ENCODE measurements at regions of chr9 and their contacts with region 1.

Region 1: DNA sequence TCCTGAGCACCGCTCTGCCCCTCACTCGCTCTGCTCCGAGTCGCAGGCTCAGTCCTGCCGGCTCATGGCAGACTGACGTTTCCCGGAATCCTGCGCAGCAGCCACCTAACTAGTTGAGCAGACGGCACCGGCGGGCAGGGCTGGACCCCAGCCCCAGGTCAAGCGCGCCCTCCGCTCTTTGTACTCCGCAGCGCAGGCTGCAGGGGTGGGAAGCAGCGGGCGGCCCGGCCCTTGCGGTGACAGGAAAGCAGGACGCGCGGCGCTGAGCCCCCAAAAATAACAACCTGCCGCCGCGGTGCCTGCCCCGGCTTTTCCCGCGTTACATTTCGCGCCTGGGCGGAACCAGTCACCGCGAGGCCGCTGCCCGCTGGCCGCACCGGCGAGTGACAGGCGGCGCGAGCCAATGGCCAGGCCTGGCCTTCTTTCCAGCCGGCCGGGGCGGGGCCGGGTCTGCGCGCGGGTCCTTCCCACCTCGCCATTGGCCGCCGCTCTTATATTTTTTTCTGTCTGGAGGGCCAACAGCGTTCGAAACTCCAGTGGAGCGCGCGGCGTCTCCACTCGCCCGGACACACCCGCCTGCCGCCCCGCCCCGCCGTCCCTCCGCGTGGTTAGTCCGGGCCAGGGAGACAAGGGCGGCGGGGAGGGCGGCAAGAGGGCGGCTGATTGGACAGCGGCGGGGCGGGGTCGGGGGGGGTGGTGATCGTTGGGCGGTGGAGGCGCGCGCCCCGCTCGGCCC is at the start of gene ZNF367:
- DNase-seq: peak; percentile 98
- total RNA-seq, gene ZNF367: 2.1 TPM

Region 2: DNA sequence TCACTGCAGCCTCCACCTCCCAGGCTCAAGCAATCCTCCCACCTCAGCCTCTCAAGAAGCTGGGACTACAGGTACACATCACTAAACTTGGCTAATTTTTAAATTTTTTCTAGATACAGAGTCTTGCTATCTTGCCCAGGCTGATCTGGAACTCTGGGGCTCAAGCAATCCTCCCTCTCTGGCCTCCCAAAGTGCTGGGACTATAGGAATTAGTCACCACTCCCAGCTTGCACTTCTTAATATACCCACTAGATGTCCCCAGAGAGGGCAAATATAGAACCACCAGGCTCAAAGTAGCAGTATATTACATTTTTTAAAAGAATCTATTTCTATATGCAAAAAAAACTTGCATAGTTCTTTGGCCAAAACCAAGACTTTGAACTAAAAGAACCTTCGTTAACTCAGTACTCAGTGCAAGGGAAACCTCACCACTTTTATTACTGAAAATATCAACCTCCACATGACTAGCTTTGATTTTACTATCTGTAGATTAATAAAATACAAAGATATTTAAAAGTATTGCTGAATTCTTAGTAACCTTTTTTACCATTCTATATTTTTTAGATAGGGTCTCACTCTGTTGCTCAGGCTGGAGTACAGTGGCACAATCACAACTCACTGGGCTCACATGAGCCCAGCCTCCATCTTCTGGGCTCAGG is 90.4 kb before region 1 on chr9:
- intact Hi-C with region 1: loop called (anchors 10 kb)
- DNase-seq: no peak

Region 3: GRCh38 chr9:96383165-96383942 is 34.9 kb before region 1 on chr9 and contains the start of gene SLC35D2:
- intact Hi-C with region 1: loop called (anchors 5 kb)
- DNase-seq: peak; percentile 80
- total RNA-seq, gene SLC35D2: 12.9 TPM

Region 4: GRCh38 chr9:96555567-96556386 is 137.5 kb after region 1 on chr9:
- intact Hi-C with region 1: loop called (anchors 5 kb)
- DNase-seq: no peak

Region 5: DNA sequence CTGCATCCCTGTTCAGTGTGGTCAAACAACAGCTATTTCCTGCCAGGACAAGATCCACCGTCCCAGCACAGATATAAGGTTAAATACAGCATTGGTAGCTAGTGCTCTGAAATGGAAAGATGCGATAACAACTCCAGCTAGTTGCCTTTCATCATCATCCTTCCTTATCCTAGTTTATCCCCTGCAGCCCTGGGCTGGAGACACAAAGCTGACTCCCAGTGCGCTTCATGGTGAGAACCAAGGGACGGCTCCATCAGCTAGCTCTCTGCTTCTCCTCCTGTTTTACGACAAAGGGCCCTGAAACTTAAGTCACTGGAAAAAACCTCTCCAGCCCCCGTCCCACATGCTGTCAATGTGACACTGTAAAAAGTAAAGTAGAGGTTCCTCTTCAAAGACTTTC is 163.5 kb after region 1 on chr9:
- intact Hi-C with region 1: no loop called
- DNase-seq: no peak

Region 6: DNA sequence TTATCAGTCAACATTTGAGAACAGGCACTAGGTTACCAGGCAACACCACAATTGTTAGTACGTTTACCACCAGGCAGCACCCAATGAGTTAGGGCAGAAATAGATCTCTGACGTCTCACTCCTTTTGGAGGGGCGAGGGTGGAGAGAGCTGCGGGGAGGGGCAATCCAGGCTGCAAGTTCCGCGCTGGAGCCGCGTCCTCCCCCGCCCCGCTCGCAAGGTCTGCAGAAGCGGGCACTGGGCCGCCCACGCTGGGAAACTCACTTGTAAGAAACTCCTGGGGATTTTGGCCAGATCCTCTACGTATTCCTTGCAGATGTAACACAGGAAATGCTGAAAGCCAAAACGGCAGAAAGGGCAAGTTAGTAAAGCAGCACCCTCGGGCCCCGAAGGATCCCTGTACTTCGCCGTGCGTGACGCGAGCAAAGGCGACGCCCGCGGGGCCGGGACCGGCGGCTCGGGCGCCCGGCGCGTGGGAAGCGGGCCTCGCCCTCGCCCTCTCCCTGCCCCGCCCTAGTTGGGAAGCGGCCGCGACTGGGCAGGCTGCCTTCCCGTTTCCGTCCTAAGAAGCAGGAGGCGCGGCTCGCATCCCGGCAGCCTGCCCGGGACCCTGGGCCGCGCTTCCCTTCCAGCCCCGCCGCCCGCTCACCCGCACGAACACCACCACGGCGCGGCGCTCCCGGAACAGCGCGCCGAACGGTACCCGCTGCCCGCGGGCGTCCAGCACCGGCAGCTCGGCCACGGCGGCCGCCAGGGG is 236.4 kb after region 1 on chr9:
- intact Hi-C with region 1: loop called (anchors 1 kb)
- DNase-seq: peak; percentile 92

Measured in cardiac septum (tissue), 1 donor.